AG04450 (cell line): ENCODE measurements at regions of chr3 and their contacts with region 1.

Region 1: DNA sequence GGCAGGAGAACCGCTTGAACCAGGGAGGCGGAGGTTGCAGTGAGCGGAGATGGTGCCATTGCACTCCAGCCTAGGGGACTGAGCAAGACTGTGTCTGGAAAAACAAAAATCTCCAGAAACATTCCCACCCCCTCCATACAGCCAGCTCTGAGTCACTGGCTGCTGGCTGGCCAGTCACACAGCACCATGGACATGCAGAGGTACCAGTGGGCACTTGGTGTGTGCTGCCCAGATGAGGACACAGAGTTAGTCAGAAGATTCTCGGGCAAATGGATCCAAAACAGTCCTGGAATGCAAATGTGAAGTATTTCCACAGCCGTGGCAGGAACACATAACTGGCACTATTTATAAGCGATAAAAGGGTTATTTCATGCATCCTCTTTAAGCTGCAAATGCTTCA is 44.6 kb downstream of the BDH1 start:
- DNase-seq: no peak
- H3K4me3 ChIP-seq: no peak overlapping the region
- H3K27ac ChIP-seq: no peak overlapping the region
- H3K27me3 ChIP-seq: peaks cover 5% of the 10 kb centered on the region
- CTCF ChIP-seq: no peak

Region 2: GRCh38 chr3:197224034-197224444 is 287.1 kb before region 1 on chr3:
- CTCF ChIA-PET with region 1: interaction called, 39 read pairs
- POLR2A ChIA-PET with region 1: no interaction called
- DNase-seq: peak; percentile 30
- H3K4me3 ChIP-seq: no peak overlapping the region
- H3K27ac ChIP-seq: no peak overlapping the region
- H3K27me3 ChIP-seq: no peaks in the 10 kb centered on the region
- CTCF ChIP-seq: peak; percentile 69

Region 3: DNA sequence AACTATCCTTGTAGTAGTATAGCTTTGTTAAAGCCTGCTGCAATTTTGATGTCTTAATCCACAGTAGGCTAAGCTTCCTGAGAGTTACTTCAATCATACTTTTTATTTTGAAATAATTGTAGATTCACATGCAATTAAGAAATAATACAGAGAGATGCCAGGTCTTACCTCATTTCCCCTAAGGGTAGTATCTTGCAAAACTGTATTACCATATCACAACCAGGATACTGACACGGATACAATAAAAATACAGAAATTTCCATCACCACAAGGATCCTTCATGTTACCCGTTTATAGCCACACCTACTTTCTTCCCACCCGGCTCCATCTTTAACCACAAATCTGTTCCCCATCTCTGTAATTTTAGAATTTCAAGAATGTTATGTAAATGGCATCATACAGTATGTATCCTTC is 22.8 kb after region 1 on chr3:
- CTCF ChIA-PET with region 1: no interaction called
- POLR2A ChIA-PET with region 1: no interaction called
- DNase-seq: no peak
- H3K4me3 ChIP-seq: no peak overlapping the region
- H3K27ac ChIP-seq: no peak overlapping the region
- H3K27me3 ChIP-seq: no peaks in the 10 kb centered on the region
- CTCF ChIP-seq: no peak

Region 4: GRCh38 chr3:197730200-197730599 is 219.1 kb after region 1 on chr3:
- CTCF ChIA-PET with region 1: no interaction called
- POLR2A ChIA-PET with region 1: no interaction called
- DNase-seq: no peak
- H3K4me3 ChIP-seq: no peak overlapping the region
- H3K27ac ChIP-seq: peak overlapping the region; percentile 57
- H3K27me3 ChIP-seq: no peaks in the 10 kb centered on the region
- CTCF ChIP-seq: no peak